ENCODE measurements at regions of chr3 and their contacts with region 1.

Region 1: DNA sequence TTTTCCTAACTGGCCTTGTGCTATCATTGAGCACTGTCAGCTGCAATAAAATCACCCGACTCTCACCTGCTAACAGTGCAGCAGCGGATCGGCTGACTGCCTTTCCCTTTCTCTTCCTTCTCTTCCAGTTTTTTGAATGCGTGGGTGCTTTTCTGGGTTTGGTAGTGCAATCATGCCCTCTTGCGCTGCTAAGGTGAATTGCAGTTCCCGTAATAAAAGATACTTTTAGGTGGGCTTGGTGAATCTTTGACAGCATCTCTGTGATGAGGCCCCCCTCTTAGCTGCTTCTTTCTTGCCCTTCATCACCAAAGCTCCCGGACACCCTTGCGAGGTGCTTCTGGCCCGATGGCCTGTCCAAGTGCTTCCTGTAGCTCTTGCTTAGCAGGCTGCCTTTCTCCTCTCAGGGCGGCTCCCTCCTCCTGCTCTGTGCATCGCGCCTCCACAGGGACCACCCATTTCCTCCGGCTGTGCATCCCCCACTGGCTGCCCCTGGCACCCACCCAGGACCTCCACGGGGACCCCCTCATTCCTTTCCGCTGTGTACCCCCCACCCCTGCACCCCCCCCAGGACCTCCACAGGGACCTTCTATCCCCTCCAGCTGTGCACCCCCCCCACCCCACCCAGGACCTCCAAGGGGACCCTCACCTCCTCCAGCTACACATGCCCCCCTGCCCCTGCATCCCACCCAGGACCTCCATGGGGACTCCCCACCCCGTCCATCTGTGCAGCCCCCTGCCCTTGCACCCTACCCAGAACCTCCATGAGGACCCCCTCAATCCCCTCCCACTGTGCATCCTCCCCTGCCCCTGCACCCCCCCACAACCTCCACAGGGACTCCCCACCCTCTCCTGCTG is 50.8 kb upstream of the RPL32 start:
- DNase-seq: peak in 5 of 7 donors; percentile 47 to 76 (median 64)
- H3K4me3 ChIP-seq: no peak overlapping the region
- H3K27ac ChIP-seq: no peak overlapping the region
- H3K4me1 ChIP-seq: peaks cover 4 to 9% of the 10 kb centered on the region in 2 donors
- H3K27me3 ChIP-seq: no peaks in the 10 kb centered on the region
- CTCF ChIP-seq: peak; percentile 76 to 98 (median 91)
- POLR2A ChIP-seq: no peak

Region 2: GRCh38 chr3:12866836-12867235 is 25.4 kb before region 1 on chr3:
- intact Hi-C with region 1: loop called in 1 of 2 experiments (anchors 2 kb)
- DNase-seq: no peak
- H3K4me3 ChIP-seq: no peak overlapping the region
- H3K27ac ChIP-seq: no peak overlapping the region
- H3K4me1 ChIP-seq: peaks cover 0 to 8% of the 10 kb centered on the region in 2 donors
- H3K27me3 ChIP-seq: no peaks in the 10 kb centered on the region
- CTCF ChIP-seq: no peak
- POLR2A ChIP-seq: no peak

Measured in adrenal gland (tissue), 19 donors.